Caco-2 (cell line): ENCODE measurements at regions of chr1 and their contacts with region 1.

Region 1: GRCh38 chr1:27489910-27490741 is at the start of gene WASF2:
- DNase-seq: peak; percentile 95 to 96
- H3K4me3 ChIP-seq: peak within 1 kb of the TSS; percentile 91
- H3K4me3 Mint-ChIP-seq: peak within 1 kb of the TSS; percentile 93
- H3K27ac Mint-ChIP-seq: peak within 1 kb of the TSS; percentile 100
- H3K4me1 ChIP-seq: peaks cover 11% of the 10 kb centered on the region
- H3K4me1 Mint-ChIP-seq: peaks cover 6% of the 10 kb centered on the region
- H3K27me3 ChIP-seq: no peaks in the 10 kb centered on the region
- H3K27me3 Mint-ChIP-seq: no peaks in the 10 kb centered on the region
- CTCF ChIP-seq: no peak
- total RNA-seq, gene WASF2: 59.2 and 68.6 TPM in 2 replicates

Region 2: DNA sequence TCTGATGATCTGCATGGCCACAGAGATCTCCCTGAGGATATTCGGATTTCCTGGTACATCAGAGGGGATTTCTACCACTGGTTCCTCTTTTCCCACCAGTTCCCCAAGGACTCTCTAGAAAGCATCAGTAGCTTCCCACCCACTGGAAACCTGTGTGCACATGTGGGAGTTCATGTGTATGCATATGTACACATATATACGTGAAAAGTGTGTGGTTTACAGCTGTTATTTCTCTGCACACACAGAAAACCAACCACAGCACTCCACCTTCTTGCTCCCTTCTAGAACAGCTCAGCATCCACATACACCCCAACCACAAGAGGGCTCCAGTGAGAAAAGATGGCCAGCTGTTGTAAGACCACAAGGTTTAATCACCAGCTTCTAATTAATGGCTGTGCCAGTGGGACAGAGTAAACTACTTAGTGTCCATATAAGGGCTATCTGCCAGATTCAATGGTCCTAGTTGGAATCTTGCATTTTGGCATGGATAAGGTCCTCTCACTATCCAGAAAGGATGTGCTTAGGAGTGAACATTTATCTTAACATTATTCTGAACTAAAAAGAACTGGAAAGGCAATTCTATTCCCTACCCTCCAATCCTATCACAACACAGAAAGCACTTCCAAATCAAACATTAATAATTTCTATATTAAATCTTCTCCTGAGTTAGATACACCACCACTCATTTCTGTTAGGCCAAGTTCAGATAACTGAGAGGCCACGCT is 73.6 kb before region 1 on chr1:
- CTCF ChIA-PET with region 1: interaction called, 4 read pairs
- POLR2A ChIA-PET with region 1: no interaction called
- intact Hi-C with region 1: loop called (anchors 2 kb)
- DNase-seq: peak; percentile 51 to 62
- H3K4me3 ChIP-seq: no peak overlapping the region
- H3K4me3 Mint-ChIP-seq: no peak overlapping the region
- H3K27ac Mint-ChIP-seq: no peak overlapping the region
- H3K4me1 ChIP-seq: peaks cover 7% of the 10 kb centered on the region
- H3K4me1 Mint-ChIP-seq: peaks cover 15% of the 10 kb centered on the region
- H3K27me3 ChIP-seq: no peaks in the 10 kb centered on the region
- H3K27me3 Mint-ChIP-seq: no peaks in the 10 kb centered on the region
- CTCF ChIP-seq: peak; percentile 59 to 72

Region 3: DNA sequence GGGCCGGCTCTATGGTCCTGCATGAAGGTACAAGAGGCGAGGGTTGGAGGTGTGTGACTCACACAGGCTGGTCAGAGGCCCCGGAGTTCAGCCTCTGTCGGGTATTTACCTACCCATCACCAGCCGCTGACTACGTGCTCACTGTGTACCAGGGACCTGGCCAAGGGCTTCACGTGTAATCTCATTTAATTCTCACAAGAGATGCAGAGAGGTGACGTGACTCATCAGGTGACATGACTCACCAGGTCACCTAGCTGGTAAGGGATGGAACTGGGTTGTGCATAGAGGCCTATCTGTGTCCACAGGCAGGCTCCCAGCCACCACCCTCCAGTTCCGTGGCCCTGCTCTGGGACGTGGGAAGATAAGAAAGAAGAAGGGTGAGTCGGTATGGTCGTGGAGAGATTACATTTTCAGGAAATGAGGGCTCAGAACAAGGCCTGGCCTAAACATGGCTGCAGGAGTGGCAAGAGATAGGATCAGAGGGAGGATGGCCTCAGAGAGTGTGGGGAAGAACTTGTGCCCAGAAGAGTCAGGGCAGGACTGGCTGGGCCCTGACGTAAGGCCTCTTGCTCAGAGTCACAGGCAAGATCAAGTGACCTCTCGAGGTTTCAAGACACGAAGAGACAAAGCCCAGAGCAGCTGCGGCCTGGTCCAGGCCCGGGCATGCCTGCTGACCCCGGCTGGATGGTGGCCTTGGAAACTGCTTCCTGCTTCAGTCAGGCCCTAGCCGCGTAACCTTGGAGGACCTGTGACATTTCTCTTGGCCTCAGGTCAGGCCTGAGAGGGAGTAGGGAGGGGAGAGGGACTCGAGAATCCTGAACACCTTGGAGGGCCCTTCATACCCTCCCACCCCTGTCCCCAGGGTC is 52.5 kb after region 1 on chr1:
- CTCF ChIA-PET with region 1: no interaction called
- POLR2A ChIA-PET with region 1: no interaction called
- intact Hi-C with region 1: no loop called
- DNase-seq: peak; percentile 45 to 77
- H3K4me3 ChIP-seq: no peak overlapping the region
- H3K4me3 Mint-ChIP-seq: no peak overlapping the region
- H3K27ac Mint-ChIP-seq: peak overlapping the region; percentile 31
- H3K4me1 ChIP-seq: peaks cover 15% of the 10 kb centered on the region
- H3K4me1 Mint-ChIP-seq: peaks cover 20% of the 10 kb centered on the region
- H3K27me3 ChIP-seq: no peaks in the 10 kb centered on the region
- H3K27me3 Mint-ChIP-seq: no peaks in the 10 kb centered on the region
- CTCF ChIP-seq: no peak

Region 4: GRCh38 chr1:27959400-27960217 is 469.5 kb after region 1 on chr1 and contains the start of gene XKR8:
- CTCF ChIA-PET with region 1: no interaction called
- POLR2A ChIA-PET with region 1: no interaction called
- intact Hi-C with region 1: no loop called
- DNase-seq: peak; percentile 84
- H3K4me3 ChIP-seq: peak within 1 kb of the TSS; percentile 63
- H3K4me3 Mint-ChIP-seq: peak within 1 kb of the TSS; percentile 77
- H3K27ac Mint-ChIP-seq: peak within 1 kb of the TSS; percentile 83
- H3K4me1 ChIP-seq: no peaks in the 10 kb centered on the region
- H3K4me1 Mint-ChIP-seq: no peaks in the 10 kb centered on the region
- H3K27me3 ChIP-seq: no peaks in the 10 kb centered on the region
- H3K27me3 Mint-ChIP-seq: no peaks in the 10 kb centered on the region
- CTCF ChIP-seq: peak; percentile 35 to 67
- total RNA-seq, gene XKR8: 8.9 and 10.4 TPM in 2 replicates